ENCODE measurements at regions of chr7 and their contacts with region 1.

Region 1: DNA sequence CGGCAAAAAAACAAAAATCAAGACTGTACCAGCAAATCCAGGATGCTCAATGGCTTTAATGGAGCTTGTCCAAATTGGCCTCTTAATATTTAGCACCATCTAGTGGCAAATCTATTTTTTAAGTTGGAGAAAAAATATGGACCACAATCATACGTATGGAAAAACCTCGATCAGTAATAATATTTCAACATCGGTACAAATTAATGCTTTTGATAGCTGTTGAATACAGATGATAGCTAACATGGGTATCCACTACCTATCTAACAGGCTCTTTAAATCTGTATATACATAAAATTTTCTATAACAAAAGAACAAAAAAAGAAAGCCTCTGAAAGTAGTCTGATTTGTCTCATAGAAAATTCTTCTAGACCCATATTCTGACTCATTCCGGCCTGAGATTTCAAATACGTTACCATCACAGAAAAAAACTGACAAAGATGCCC is 29.2 kb downstream of the COA1 start:
- DNase-seq: peak in 4 of 5 donors; percentile 62 to 70 (median 68)
- H3K4me3 ChIP-seq: no peak overlapping the region
- H3K4me3 Mint-ChIP-seq: peak overlapping the region in 6 of 8 donors; percentile 4 to 53 (median 32)
- H3K27ac ChIP-seq: no peak overlapping the region
- H3K27ac Mint-ChIP-seq: peak overlapping the region in 6 of 7 donors; percentile 48 to 85 (median 70)
- H3K4me1 ChIP-seq: peaks cover 23% of the 10 kb centered on the region
- H3K4me1 Mint-ChIP-seq: peaks cover 15 to 31% (median 19%) of the 10 kb centered on the region in 4 donors
- H3K27me3 ChIP-seq: no peaks in the 10 kb centered on the region
- H3K27me3 Mint-ChIP-seq: no peaks in the 10 kb centered on the region

Region 2: DNA sequence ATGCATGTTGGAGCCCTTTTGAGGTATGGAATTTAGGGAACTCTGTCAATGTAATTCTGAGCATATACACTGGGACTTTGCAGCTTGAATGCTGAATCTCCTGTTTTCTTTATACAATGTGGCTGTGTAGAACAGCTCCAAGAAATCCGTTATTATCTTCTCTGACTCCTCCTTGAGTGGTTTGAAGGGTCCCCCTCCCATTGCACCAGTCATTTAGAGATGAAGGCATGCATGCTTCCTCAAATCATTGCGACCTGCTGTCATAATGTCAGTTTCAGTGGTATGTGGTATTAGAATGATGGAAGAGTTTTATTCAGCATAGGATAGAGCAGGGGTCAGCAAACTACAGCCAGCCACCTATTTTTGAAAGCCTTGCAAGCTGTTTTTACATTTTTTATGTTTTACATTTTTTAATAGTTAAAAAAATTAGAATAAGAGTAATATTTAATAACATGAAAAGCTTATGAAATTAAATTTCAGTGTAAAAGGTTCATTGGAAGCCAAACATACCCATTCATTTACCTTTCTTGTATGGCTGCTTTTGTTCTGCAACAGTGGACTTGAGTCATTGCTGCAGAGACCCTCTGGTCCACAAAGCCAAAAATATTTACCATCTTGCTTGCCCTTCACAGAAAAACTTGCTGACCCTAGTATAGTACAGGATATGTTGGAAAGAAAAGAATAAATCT is 109.1 kb before region 1 on chr7:
- CTCF ChIA-PET with region 1: interaction called, 670 read pairs
- POLR2A ChIA-PET with region 1: interaction called, 262 read pairs
- intact Hi-C with region 1: no loop called
- DNase-seq: no peak
- H3K4me3 ChIP-seq: peak overlapping the region in 1 of 2 donors; percentile 14
- H3K4me3 Mint-ChIP-seq: peak overlapping the region; percentile 57 to 92 (median 78)
- H3K27ac ChIP-seq: peak overlapping the region; percentile 25
- H3K27ac Mint-ChIP-seq: peak overlapping the region; percentile 65 to 94 (median 91)
- H3K4me1 ChIP-seq: peaks cover 89% of the 10 kb centered on the region
- H3K4me1 Mint-ChIP-seq: peaks cover 68 to 96% (median 79%) of the 10 kb centered on the region in 4 donors
- H3K27me3 ChIP-seq: no peaks in the 10 kb centered on the region
- H3K27me3 Mint-ChIP-seq: no peaks in the 10 kb centered on the region

Region 3: GRCh38 chr7:43625453-43625852 is 74.6 kb before region 1 on chr7:
- CTCF ChIA-PET with region 1: interaction called, 27 read pairs
- POLR2A ChIA-PET with region 1: interaction called, 14 read pairs
- intact Hi-C with region 1: no loop called
- DNase-seq: peak; percentile 63 to 82 (median 68)
- H3K4me3 ChIP-seq: no peak overlapping the region
- H3K4me3 Mint-ChIP-seq: peak overlapping the region; percentile 59 to 73 (median 70)
- H3K27ac ChIP-seq: peak overlapping the region; percentile 30
- H3K27ac Mint-ChIP-seq: peak overlapping the region in 6 of 7 donors; percentile 84 to 97 (median 89)
- H3K4me1 ChIP-seq: peaks cover 96% of the 10 kb centered on the region
- H3K4me1 Mint-ChIP-seq: peaks cover 3 to 94% (median 69%) of the 10 kb centered on the region in 4 donors
- H3K27me3 ChIP-seq: no peaks in the 10 kb centered on the region
- H3K27me3 Mint-ChIP-seq: no peaks in the 10 kb centered on the region

Region 4: GRCh38 chr7:43647673-43648472 is 52.2 kb before region 1 on chr7:
- CTCF ChIA-PET with region 1: interaction called, 70 read pairs
- POLR2A ChIA-PET with region 1: interaction called, 57 read pairs
- intact Hi-C with region 1: loop called (anchors 1 kb)
- DNase-seq: peak in 3 of 5 donors; percentile 19 to 68 (median 24)
- H3K4me3 ChIP-seq: peak overlapping the region; percentile 3 to 64
- H3K4me3 Mint-ChIP-seq: peak overlapping the region; percentile 71 to 90 (median 82)
- H3K27ac ChIP-seq: peak overlapping the region; percentile 70
- H3K27ac Mint-ChIP-seq: peak overlapping the region; percentile 84 to 97 (median 91)
- H3K4me1 ChIP-seq: peaks cover 99% of the 10 kb centered on the region
- H3K4me1 Mint-ChIP-seq: peaks cover 78 to 99% (median 88%) of the 10 kb centered on the region in 4 donors
- H3K27me3 ChIP-seq: no peaks in the 10 kb centered on the region
- H3K27me3 Mint-ChIP-seq: no peaks in the 10 kb centered on the region

Region 5: DNA sequence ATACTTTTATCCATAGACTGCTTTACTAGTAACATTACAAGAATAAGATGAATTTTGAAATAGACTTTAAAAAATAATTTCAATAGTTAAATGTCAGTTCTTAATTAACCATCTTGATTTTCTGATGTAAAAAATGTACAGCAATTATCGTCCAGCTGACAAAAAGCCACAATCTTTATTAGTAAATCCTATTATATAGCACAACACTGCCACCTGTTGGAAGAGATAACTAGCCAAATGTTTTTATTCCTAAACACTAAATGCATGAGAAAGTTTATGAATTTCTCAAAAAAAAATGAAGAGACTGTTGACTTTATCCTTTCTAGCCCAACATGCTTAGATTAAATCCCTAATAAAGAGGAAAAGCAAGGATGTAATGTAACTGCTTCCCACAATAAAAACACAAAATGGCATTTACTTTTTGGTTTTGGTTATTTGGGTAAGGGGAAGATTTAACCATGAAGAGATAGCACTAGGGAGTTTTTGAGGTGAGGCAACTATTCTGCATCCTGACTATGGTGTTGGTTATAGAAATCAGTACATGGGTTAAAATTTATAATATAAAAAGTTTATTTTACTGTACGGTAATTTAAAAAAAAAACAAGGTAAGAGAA is 21.2 kb after region 1 on chr7:
- CTCF ChIA-PET with region 1: interaction called, 24 read pairs
- POLR2A ChIA-PET with region 1: no interaction called
- intact Hi-C with region 1: loop called (anchors 1 kb)
- DNase-seq: peak in 4 of 5 donors; percentile 54 to 59 (median 58)
- H3K4me3 ChIP-seq: no peak overlapping the region
- H3K4me3 Mint-ChIP-seq: no peak overlapping the region
- H3K27ac ChIP-seq: no peak overlapping the region
- H3K27ac Mint-ChIP-seq: peak overlapping the region in 3 of 7 donors; percentile 14 to 71 (median 47)
- H3K4me1 ChIP-seq: no peaks in the 10 kb centered on the region
- H3K4me1 Mint-ChIP-seq: peaks cover 23 to 46% (median 34%) of the 10 kb centered on the region in 4 donors
- H3K27me3 ChIP-seq: no peaks in the 10 kb centered on the region
- H3K27me3 Mint-ChIP-seq: no peaks in the 10 kb centered on the region

Region 6: GRCh38 chr7:43747309-43748105 is 47.4 kb after region 1 on chr7:
- CTCF ChIA-PET with region 1: no interaction called
- POLR2A ChIA-PET with region 1: no interaction called
- intact Hi-C with region 1: no loop called
- DNase-seq: no peak
- H3K4me3 ChIP-seq: no peak overlapping the region
- H3K4me3 Mint-ChIP-seq: no peak overlapping the region
- H3K27ac ChIP-seq: no peak overlapping the region
- H3K27ac Mint-ChIP-seq: no peak overlapping the region
- H3K4me1 ChIP-seq: no peaks in the 10 kb centered on the region
- H3K4me1 Mint-ChIP-seq: peaks cover 0 to 1% (median 0%) of the 10 kb centered on the region in 4 donors
- H3K27me3 ChIP-seq: no peaks in the 10 kb centered on the region
- H3K27me3 Mint-ChIP-seq: peaks cover 1 to 2% of the 10 kb centered on the region in 2 donors

Region 7: GRCh38 chr7:43834463-43835251 is 134.6 kb after region 1 on chr7:
- CTCF ChIA-PET with region 1: interaction called, 69 read pairs
- POLR2A ChIA-PET with region 1: interaction called, 3 read pairs
- intact Hi-C with region 1: loop called (anchors 1 kb)
- DNase-seq: peak; percentile 59 to 68 (median 64)
- H3K4me3 ChIP-seq: peak overlapping the region; percentile 45 to 58
- H3K4me3 Mint-ChIP-seq: peak overlapping the region; percentile 89 to 98 (median 96)
- H3K27ac ChIP-seq: peak overlapping the region; percentile 60
- H3K27ac Mint-ChIP-seq: peak overlapping the region; percentile 85 to 99 (median 96)
- H3K4me1 ChIP-seq: peaks cover 14% of the 10 kb centered on the region
- H3K4me1 Mint-ChIP-seq: peaks cover 16 to 25% (median 21%) of the 10 kb centered on the region in 4 donors
- H3K27me3 ChIP-seq: no peaks in the 10 kb centered on the region
- H3K27me3 Mint-ChIP-seq: no peaks in the 10 kb centered on the region

Region 8: GRCh38 chr7:43850348-43851116 is 150.5 kb after region 1 on chr7:
- CTCF ChIA-PET with region 1: no interaction called
- POLR2A ChIA-PET with region 1: no interaction called
- intact Hi-C with region 1: no loop called
- DNase-seq: no peak
- H3K4me3 ChIP-seq: no peak overlapping the region
- H3K4me3 Mint-ChIP-seq: no peak overlapping the region
- H3K27ac ChIP-seq: no peak overlapping the region
- H3K27ac Mint-ChIP-seq: no peak overlapping the region
- H3K4me1 ChIP-seq: no peaks in the 10 kb centered on the region
- H3K4me1 Mint-ChIP-seq: peaks cover 0 to 4% (median 0%) of the 10 kb centered on the region in 4 donors
- H3K27me3 ChIP-seq: no peaks in the 10 kb centered on the region
- H3K27me3 Mint-ChIP-seq: peaks cover 2 to 3% of the 10 kb centered on the region in 2 donors